GM10248 (cell line): ENCODE measurements at regions of chr18 and their contacts with region 1.

Region 1: GRCh38 chr18:59308248-59308937 is 10.1 kb downstream of the CPLX4 start:
- DNase-seq: peak; percentile 81
- CTCF ChIP-seq: peak; percentile 89

Region 2: GRCh38 chr18:59318460-59319050 is 10.2 kb after region 1 on chr18 and contains the start of gene CPLX4:
- CTCF ChIA-PET with region 1: interaction called, 13 read pairs
- POLR2A ChIA-PET with region 1: no interaction called
- DNase-seq: no peak
- CTCF ChIP-seq: no peak

Region 3: GRCh38 chr18:59325965-59326364 is 17.6 kb after region 1 on chr18:
- CTCF ChIA-PET with region 1: interaction called, 15 read pairs
- POLR2A ChIA-PET with region 1: no interaction called
- DNase-seq: no peak
- CTCF ChIP-seq: no peak

Region 4: GRCh38 chr18:59340817-59341216 is 32.4 kb after region 1 on chr18:
- CTCF ChIA-PET with region 1: interaction called, 13 read pairs
- POLR2A ChIA-PET with region 1: no interaction called
- DNase-seq: no peak
- CTCF ChIP-seq: no peak

Region 5: GRCh38 chr18:59353079-59353680 is 44.8 kb after region 1 on chr18:
- CTCF ChIA-PET with region 1: interaction called, 12 read pairs
- POLR2A ChIA-PET with region 1: no interaction called
- DNase-seq: no peak
- CTCF ChIP-seq: no peak